AG04450 (cell line): ENCODE measurements at regions of chr20 and their contacts with region 1.

Region 1: DNA sequence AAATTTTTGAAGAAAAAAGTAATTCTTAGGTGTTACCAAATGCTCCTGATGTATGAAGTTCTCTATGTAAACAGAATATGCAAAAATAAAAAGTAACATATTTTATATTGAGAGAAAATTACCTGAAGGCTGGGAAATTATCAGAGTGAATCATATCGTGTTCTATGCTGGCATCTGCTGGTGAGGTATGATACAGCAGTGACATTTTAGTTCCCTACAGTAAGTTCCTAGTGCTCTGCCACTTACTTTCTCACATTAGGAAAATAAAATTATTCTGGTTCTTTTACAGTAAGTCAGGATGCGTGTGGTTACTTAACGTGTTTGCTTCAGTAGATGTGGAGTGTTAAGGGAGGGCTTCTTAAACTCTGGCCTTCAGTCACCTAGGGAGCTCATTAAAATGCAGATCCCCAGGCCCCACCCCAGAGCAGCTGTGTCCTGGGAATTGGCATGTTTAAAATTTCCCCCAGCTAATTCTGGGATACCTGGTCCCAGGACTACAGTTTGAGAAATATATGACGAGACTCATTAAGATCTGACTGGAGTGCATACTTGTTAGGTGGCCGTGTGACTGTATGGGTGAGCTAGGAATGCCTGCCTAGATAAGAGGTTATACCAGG is 3.2 kb downstream of the ACTR5 start:
- DNase-seq: no peak
- H3K4me3 ChIP-seq: no peak overlapping the region
- H3K27ac ChIP-seq: no peak overlapping the region
- H3K27me3 ChIP-seq: no peaks in the 10 kb centered on the region
- CTCF ChIP-seq: peak; percentile 74

Region 2: DNA sequence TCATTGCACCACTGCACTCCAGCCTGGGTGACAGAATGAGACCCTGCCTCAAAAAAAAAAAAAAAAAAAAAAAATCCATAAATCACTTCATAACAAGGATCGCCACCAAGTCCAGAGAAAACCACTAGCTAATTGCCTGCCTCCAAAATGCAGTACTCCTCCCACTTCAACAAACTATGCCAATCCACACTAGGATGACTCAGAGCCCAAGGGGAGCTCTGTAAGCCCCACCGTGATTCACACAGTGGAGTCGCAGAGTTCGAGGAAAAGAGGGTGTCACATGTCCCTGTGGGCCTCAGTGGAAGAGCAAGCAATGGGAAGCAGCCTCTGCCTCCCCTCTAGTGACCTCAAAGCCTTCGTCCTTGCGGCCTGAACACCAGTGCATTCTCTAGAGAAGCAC is 325.5 kb before region 1 on chr20:
- CTCF ChIA-PET with region 1: no interaction called
- POLR2A ChIA-PET with region 1: no interaction called
- DNase-seq: peak; percentile 69
- H3K4me3 ChIP-seq: no peak overlapping the region
- H3K27ac ChIP-seq: peak overlapping the region; percentile 70
- H3K27me3 ChIP-seq: no peaks in the 10 kb centered on the region
- CTCF ChIP-seq: no peak

Region 3: GRCh38 chr20:38649275-38649891 is 102.1 kb before region 1 on chr20:
- CTCF ChIA-PET with region 1: interaction called, 21 read pairs
- POLR2A ChIA-PET with region 1: no interaction called
- DNase-seq: no peak
- H3K4me3 ChIP-seq: no peak overlapping the region
- H3K27ac ChIP-seq: no peak overlapping the region
- H3K27me3 ChIP-seq: peaks cover 25% of the 10 kb centered on the region
- CTCF ChIP-seq: peak; percentile 47

Region 4: GRCh38 chr20:38764567-38765355 is 13.3 kb after region 1 on chr20:
- CTCF ChIA-PET with region 1: interaction called, 15 read pairs
- POLR2A ChIA-PET with region 1: no interaction called
- DNase-seq: peak; percentile 58
- H3K4me3 ChIP-seq: no peak overlapping the region
- H3K27ac ChIP-seq: peak overlapping the region; percentile 31
- H3K27me3 ChIP-seq: no peaks in the 10 kb centered on the region
- CTCF ChIP-seq: no peak